ENCODE measurements at regions of chr17 and their contacts with region 1.

Region 1: GRCh38 chr17:30696234-30696633 is 128.3 kb downstream of the CRLF3 start:
- DNase-seq: no peak

Region 2: DNA sequence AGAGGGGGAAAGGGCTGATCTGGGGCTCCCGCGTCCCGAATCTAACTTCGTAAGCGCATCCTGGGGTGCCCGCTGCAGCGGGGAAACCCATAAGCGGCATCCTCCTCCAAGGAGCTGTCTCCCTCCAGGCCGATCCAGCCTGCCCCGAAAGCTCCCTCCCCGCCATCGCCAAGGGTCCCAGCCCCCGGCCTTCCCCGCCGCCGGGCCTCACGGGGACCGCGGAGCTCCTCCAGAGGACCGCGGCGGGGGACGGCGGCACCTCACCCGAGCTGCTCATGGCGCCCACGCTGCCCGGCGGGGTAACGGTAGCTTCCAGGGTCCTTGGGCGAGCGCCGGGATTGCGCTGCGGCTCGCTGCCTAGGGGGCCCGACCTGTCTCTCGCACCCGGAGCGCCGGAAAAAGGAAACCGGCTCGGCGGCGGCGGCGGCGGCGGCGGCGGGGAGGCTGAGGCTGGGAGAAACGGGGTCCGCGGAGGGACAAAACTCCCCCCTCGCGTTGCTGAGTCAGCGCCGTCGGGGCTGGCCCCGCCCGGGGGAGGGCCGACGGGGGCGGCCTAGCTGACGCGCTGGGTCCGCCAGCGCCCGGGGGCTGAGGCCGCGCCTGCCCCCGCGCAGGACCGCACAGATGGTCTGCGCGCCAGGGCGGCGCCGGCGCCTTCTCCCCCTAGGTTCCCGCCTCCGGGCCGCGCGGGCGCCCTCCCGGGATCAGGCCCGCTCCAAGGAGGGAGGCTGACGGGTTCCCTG is 404.5 kb before region 1 on chr17 and contains the start of gene BLMH:
- intact Hi-C with region 1: loop called in 1 of 2 experiments (anchors 5 kb)
- DNase-seq: peak; percentile 94
- total RNA-seq, gene BLMH: 23.3 to 28.4 TPM

Region 3: DNA sequence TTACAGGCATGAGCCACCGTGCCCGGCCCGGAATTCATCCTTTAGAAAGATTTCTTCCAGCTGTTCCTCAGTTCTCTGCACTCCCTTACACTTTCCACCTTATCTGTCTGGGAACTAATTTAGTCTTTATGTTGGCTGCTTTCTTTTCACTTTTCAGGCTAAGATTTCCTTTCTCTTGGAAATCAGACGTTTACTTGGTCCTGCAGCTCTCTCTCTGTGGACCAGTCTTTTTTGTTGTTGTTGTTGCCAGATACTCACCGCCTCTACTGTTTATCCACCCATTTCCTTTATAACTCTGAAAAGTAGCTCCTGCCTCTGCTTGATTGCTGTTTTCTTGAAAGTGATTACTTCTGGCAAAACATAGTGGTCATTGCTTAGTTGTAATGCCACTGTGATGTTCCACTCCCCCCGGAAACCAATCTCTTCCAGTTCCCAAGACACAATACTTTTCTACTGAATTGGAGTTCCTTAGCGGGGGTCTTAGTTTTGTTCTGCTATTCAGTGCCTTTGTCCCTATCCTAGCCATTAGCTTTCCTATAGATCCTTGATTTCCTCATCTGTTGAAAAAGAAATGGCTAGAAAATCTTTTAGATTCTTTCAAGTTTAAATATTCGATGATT is 404.7 kb after region 1 on chr17:
- intact Hi-C with region 1: no loop called
- DNase-seq: no peak